ENCODE measurements at regions of chr1 and their contacts with region 1.

Region 1: GRCh38 chr1:208409176-208409575 is 165.0 kb upstream of the PLXNA2 start:
- DNase-seq: no peak
- ATAC-seq: no peak
- H3K4me3 ChIP-seq: no peak overlapping the region
- H3K4me3 Mint-ChIP-seq: no peak overlapping the region
- H3K27ac ChIP-seq: no peak overlapping the region
- H3K27ac Mint-ChIP-seq: no peak overlapping the region
- H3K4me1 ChIP-seq: no peaks in the 10 kb centered on the region
- H3K4me1 Mint-ChIP-seq: no peaks in the 10 kb centered on the region
- H3K27me3 ChIP-seq: no peaks in the 10 kb centered on the region
- H3K27me3 Mint-ChIP-seq: no peaks in the 10 kb centered on the region
- CTCF ChIP-seq: no peak

Region 2: GRCh38 chr1:208061632-208062031 is 347.5 kb before region 1 on chr1:
- CTCF ChIA-PET with region 1: no interaction called
- POLR2A ChIA-PET with region 1: no interaction called
- intact Hi-C with region 1: loop called in 1 of 2 experiments (anchors 5 kb)
- DNase-seq: no peak
- ATAC-seq: no peak
- H3K4me3 ChIP-seq: no peak overlapping the region
- H3K4me3 Mint-ChIP-seq: no peak overlapping the region
- H3K27ac ChIP-seq: no peak overlapping the region
- H3K27ac Mint-ChIP-seq: no peak overlapping the region
- H3K4me1 ChIP-seq: no peaks in the 10 kb centered on the region
- H3K4me1 Mint-ChIP-seq: no peaks in the 10 kb centered on the region
- H3K27me3 ChIP-seq: no peaks in the 10 kb centered on the region
- H3K27me3 Mint-ChIP-seq: no peaks in the 10 kb centered on the region
- CTCF ChIP-seq: no peak

Region 3: DNA sequence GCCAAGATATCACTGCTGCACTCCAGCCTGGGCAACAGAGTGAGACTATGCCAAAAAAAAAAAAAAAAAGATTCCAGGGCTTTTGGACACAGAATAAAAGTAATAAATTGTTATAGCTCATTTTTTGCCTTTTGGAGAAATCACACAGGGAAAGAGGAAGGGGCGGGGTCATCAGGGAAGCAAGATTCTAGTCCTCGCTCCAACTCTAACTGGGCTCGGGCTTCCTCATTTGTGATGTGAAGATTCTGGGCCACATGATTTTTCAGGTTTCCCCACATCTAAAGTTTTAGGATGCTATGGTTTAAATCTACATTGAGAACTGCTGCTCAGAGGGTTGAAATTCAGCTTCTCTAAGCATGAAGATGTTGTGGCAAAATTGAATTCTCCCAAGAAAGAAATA is 14.3 kb after region 1 on chr1:
- CTCF ChIA-PET with region 1: no interaction called
- POLR2A ChIA-PET with region 1: no interaction called
- intact Hi-C with region 1: no loop called
- DNase-seq: no peak
- ATAC-seq: no peak
- H3K4me3 ChIP-seq: no peak overlapping the region
- H3K4me3 Mint-ChIP-seq: no peak overlapping the region
- H3K27ac ChIP-seq: no peak overlapping the region
- H3K27ac Mint-ChIP-seq: no peak overlapping the region
- H3K4me1 ChIP-seq: no peaks in the 10 kb centered on the region
- H3K4me1 Mint-ChIP-seq: no peaks in the 10 kb centered on the region
- H3K27me3 ChIP-seq: peaks cover 0 to 4% of the 10 kb centered on the region in 2 experiments
- H3K27me3 Mint-ChIP-seq: peaks cover 3% of the 10 kb centered on the region
- CTCF ChIP-seq: no peak

Measured in CD8-positive, alpha-beta T cell (primary cell).